CD8-positive, alpha-beta T cell (primary cell): ENCODE measurements at regions of chr2 and their contacts with region 1.

Region 1: GRCh38 chr2:39124000-39124745 is 3.3 kb upstream of the SOS1 start:
- DNase-seq: peak; percentile 89 to 99 (median 96)
- ATAC-seq: peak; percentile 73
- H3K4me3 ChIP-seq: peak overlapping the region; percentile 84 to 86
- H3K4me3 Mint-ChIP-seq: peak overlapping the region; percentile 91
- H3K27ac ChIP-seq: peak overlapping the region; percentile 87 to 88
- H3K27ac Mint-ChIP-seq: peak overlapping the region; percentile 96
- H3K4me1 ChIP-seq: peaks cover 41% of the 10 kb centered on the region
- H3K4me1 Mint-ChIP-seq: peaks cover 54% of the 10 kb centered on the region
- H3K27me3 ChIP-seq: no peaks in the 10 kb centered on the region
- H3K27me3 Mint-ChIP-seq: no peaks in the 10 kb centered on the region
- CTCF ChIP-seq: peak; percentile 64

Region 2: DNA sequence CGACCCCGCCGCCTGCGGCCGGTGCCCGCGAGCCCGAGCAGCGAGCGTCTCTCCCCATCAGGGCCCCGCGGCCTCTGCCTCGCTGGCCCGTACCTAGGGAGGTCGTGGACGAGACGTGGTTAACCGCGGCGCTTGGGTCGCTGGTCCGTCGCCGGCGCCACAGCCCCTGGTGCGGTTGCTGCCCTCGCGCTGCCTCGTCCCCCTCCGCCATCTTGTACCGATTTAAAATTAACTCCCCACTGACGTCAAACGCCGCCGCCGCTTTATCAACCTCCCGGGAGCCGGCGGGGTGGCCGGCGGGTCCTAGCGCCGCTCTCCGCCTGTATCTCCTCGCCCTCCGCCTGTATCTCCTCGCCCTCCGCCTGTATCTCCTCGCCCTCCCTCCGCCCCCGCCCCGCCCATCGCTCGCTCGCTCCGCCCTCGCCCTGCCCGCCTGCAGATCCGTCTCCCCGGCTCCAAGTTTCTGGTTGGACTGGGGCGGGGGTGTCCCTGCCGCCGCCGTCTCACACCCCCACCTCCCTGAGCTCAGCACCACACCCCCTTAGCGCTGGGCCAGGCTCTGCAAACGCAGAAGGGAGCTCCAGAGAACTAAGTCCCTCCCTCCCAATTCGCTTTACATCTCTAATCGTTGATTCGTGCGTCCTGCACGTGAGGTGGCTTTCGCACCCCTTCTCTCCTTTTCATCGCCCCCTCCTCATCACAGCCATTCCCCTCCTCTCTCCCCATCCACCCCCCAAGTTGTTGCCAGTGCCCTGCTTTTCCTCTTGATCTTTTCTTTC is 746.9 kb before region 1 on chr2 and contains the start of gene ATL2:
- CTCF ChIA-PET with region 1: no interaction called
- POLR2A ChIA-PET with region 1: no interaction called
- intact Hi-C with region 1: loop called (anchors 5 kb)
- DNase-seq: peak; percentile 87 to 96 (median 93)
- ATAC-seq: peak; percentile 80
- H3K4me3 ChIP-seq: peak within 1 kb of the TSS; percentile 71 to 93
- H3K4me3 Mint-ChIP-seq: peak within 1 kb of the TSS; percentile 97
- H3K27ac ChIP-seq: peak within 1 kb of the TSS; percentile 84 to 91
- H3K27ac Mint-ChIP-seq: peak within 1 kb of the TSS; percentile 96
- H3K4me1 ChIP-seq: peaks cover 35% of the 10 kb centered on the region
- H3K4me1 Mint-ChIP-seq: peaks cover 69% of the 10 kb centered on the region
- H3K27me3 ChIP-seq: no peaks in the 10 kb centered on the region
- H3K27me3 Mint-ChIP-seq: no peaks in the 10 kb centered on the region
- CTCF ChIP-seq: no peak
- total RNA-seq, gene ATL2: 76.4 to 88.2 TPM

Region 3: DNA sequence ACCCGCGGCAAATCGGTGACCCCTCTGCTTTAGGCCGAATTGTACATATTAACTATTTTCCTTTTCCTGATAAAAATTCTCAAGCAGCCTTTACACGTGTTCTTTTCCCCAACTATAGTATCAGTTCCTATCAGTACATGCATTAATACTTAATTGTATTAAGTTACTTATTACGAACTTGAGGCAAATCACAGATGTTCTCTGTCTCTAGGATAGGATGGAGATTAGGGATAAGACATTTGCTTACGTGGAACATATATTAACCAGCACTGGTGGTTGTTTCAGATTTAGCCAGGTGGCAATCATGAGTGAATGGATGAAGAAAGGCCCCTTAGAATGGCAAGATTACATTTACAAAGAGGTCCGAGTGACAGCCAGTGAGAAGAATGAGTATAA is 345.5 kb before region 1 on chr2:
- CTCF ChIA-PET with region 1: no interaction called
- POLR2A ChIA-PET with region 1: no interaction called
- intact Hi-C with region 1: loop called in 1 of 2 experiments (anchors 5 kb)
- DNase-seq: no peak
- ATAC-seq: no peak
- H3K4me3 ChIP-seq: peak overlapping the region; percentile 64 to 68
- H3K4me3 Mint-ChIP-seq: peak overlapping the region; percentile 98
- H3K27ac ChIP-seq: peak overlapping the region; percentile 72 to 77
- H3K27ac Mint-ChIP-seq: peak overlapping the region; percentile 99
- H3K4me1 ChIP-seq: peaks cover 6% of the 10 kb centered on the region
- H3K4me1 Mint-ChIP-seq: peaks cover 17% of the 10 kb centered on the region
- H3K27me3 ChIP-seq: peaks cover 0 to 3% of the 10 kb centered on the region in 2 experiments
- H3K27me3 Mint-ChIP-seq: peaks cover 6% of the 10 kb centered on the region
- CTCF ChIP-seq: no peak

Region 4: GRCh38 chr2:39033980-39034379 is 90.2 kb before region 1 on chr2:
- CTCF ChIA-PET with region 1: no interaction called
- POLR2A ChIA-PET with region 1: no interaction called
- intact Hi-C with region 1: no loop called
- DNase-seq: no peak
- ATAC-seq: no peak
- H3K4me3 ChIP-seq: no peak overlapping the region
- H3K4me3 Mint-ChIP-seq: no peak overlapping the region
- H3K27ac ChIP-seq: no peak overlapping the region
- H3K27ac Mint-ChIP-seq: no peak overlapping the region
- H3K4me1 ChIP-seq: no peaks in the 10 kb centered on the region
- H3K4me1 Mint-ChIP-seq: no peaks in the 10 kb centered on the region
- H3K27me3 ChIP-seq: no peaks in the 10 kb centered on the region
- H3K27me3 Mint-ChIP-seq: no peaks in the 10 kb centered on the region
- CTCF ChIP-seq: no peak

Region 5: GRCh38 chr2:39059366-39059952 is 64.7 kb before region 1 on chr2:
- CTCF ChIA-PET with region 1: interaction called, 21 read pairs
- POLR2A ChIA-PET with region 1: interaction called, 5 read pairs
- intact Hi-C with region 1: loop called (anchors 2 kb)
- DNase-seq: peak in 2 of 9 experiments; percentile 63 to 74
- ATAC-seq: no peak
- H3K4me3 ChIP-seq: no peak overlapping the region
- H3K4me3 Mint-ChIP-seq: no peak overlapping the region
- H3K27ac ChIP-seq: no peak overlapping the region
- H3K27ac Mint-ChIP-seq: peak overlapping the region; percentile 16
- H3K4me1 ChIP-seq: no peaks in the 10 kb centered on the region
- H3K4me1 Mint-ChIP-seq: peaks cover 3% of the 10 kb centered on the region
- H3K27me3 ChIP-seq: no peaks in the 10 kb centered on the region
- H3K27me3 Mint-ChIP-seq: no peaks in the 10 kb centered on the region
- CTCF ChIP-seq: peak; percentile 97

Region 6: DNA sequence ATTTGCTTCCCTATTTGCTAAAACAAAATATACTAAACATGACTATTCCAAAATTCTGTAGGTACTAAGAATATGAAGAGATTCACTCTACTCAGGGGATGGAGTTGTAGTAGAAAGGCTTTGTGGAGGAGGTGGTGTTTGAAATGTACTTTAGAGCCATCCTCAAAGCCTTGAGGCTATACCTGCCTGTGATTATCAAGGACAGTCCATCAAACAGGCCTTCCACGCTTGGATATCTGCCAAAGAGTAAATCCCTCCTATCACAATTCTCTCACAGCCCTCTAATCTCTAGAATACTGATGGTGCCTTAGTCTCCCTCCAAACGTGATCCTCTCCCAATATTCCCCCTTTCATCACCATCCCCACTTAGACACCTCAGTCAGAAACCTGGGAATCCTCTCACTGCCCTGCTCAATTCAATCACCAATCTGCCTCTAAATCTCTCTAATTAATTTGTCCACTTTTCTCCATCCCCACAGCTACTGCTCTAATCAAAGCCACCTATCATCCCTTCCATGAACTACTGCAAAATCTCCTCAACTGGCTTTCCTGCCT is 16.4 kb before region 1 on chr2:
- CTCF ChIA-PET with region 1: interaction called, 4 read pairs
- POLR2A ChIA-PET with region 1: interaction called, 10 read pairs
- intact Hi-C with region 1: loop called in 1 of 2 experiments (anchors 2 kb)
- DNase-seq: no peak
- ATAC-seq: no peak
- H3K4me3 ChIP-seq: no peak overlapping the region
- H3K4me3 Mint-ChIP-seq: no peak overlapping the region
- H3K27ac ChIP-seq: no peak overlapping the region
- H3K27ac Mint-ChIP-seq: peak overlapping the region; percentile 33
- H3K4me1 ChIP-seq: peaks cover 21% of the 10 kb centered on the region
- H3K4me1 Mint-ChIP-seq: peaks cover 70% of the 10 kb centered on the region
- H3K27me3 ChIP-seq: no peaks in the 10 kb centered on the region
- H3K27me3 Mint-ChIP-seq: no peaks in the 10 kb centered on the region
- CTCF ChIP-seq: no peak

Region 7: GRCh38 chr2:39227628-39228412 is 103.6 kb after region 1 on chr2:
- CTCF ChIA-PET with region 1: interaction called, 219 read pairs
- POLR2A ChIA-PET with region 1: interaction called, 71 read pairs
- intact Hi-C with region 1: loop called (anchors 1 kb)
- DNase-seq: peak; percentile 67 to 90 (median 83)
- ATAC-seq: peak; percentile 90
- H3K4me3 ChIP-seq: peak overlapping the region; percentile 31 to 35
- H3K4me3 Mint-ChIP-seq: peak overlapping the region; percentile 77
- H3K27ac ChIP-seq: no peak overlapping the region
- H3K27ac Mint-ChIP-seq: no peak overlapping the region
- H3K4me1 ChIP-seq: peaks cover 17% of the 10 kb centered on the region
- H3K4me1 Mint-ChIP-seq: peaks cover 19% of the 10 kb centered on the region
- H3K27me3 ChIP-seq: no peaks in the 10 kb centered on the region
- H3K27me3 Mint-ChIP-seq: no peaks in the 10 kb centered on the region
- CTCF ChIP-seq: peak; percentile 76

Region 8: GRCh38 chr2:39313575-39313974 is 189.4 kb after region 1 on chr2:
- CTCF ChIA-PET with region 1: no interaction called
- POLR2A ChIA-PET with region 1: no interaction called
- intact Hi-C with region 1: no loop called
- DNase-seq: no peak
- ATAC-seq: no peak
- H3K4me3 ChIP-seq: no peak overlapping the region
- H3K4me3 Mint-ChIP-seq: no peak overlapping the region
- H3K27ac ChIP-seq: no peak overlapping the region
- H3K27ac Mint-ChIP-seq: no peak overlapping the region
- H3K4me1 ChIP-seq: no peaks in the 10 kb centered on the region
- H3K4me1 Mint-ChIP-seq: no peaks in the 10 kb centered on the region
- H3K27me3 ChIP-seq: no peaks in the 10 kb centered on the region
- H3K27me3 Mint-ChIP-seq: no peaks in the 10 kb centered on the region
- CTCF ChIP-seq: no peak

Region 9: GRCh38 chr2:39642051-39642742 is 518.0 kb after region 1 on chr2:
- CTCF ChIA-PET with region 1: no interaction called
- POLR2A ChIA-PET with region 1: no interaction called
- intact Hi-C with region 1: no loop called
- DNase-seq: no peak
- ATAC-seq: no peak
- H3K4me3 ChIP-seq: no peak overlapping the region
- H3K4me3 Mint-ChIP-seq: no peak overlapping the region
- H3K27ac ChIP-seq: no peak overlapping the region
- H3K27ac Mint-ChIP-seq: no peak overlapping the region
- H3K4me1 ChIP-seq: no peaks in the 10 kb centered on the region
- H3K4me1 Mint-ChIP-seq: no peaks in the 10 kb centered on the region
- H3K27me3 ChIP-seq: no peaks in the 10 kb centered on the region
- H3K27me3 Mint-ChIP-seq: peaks cover 2% of the 10 kb centered on the region
- CTCF ChIP-seq: no peak

Region 10: DNA sequence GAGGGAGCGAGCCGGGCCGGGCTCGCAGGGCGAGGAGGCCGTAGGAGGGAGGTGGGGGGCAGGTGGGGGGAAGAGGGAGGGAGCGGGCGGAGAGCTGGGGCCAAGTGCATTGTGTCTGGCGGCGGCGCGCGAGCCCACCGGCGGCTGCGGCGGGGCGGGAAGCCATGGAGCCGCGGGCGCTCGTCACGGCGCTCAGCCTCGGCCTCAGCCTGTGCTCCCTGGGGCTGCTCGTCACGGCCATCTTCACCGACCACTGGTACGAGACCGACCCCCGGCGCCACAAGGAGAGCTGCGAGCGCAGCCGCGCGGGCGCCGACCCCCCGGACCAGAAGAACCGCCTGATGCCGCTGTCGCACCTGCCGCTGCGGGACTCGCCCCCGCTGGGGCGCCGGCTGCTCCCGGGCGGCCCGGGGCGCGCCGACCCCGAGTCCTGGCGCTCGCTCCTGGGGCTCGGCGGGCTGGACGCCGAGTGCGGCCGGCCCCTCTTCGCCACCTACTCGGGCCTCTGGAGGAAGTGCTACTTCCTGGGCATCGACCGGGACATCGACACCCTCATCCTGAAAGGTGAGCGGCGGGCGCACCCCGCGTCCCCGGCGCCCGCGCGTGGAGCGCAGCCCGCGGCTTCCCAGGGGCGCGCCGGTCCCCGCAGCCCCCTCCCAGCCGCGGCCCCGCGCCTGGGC is 541.8 kb after region 1 on chr2 and contains the start of gene TMEM178A:
- CTCF ChIA-PET with region 1: no interaction called
- POLR2A ChIA-PET with region 1: no interaction called
- intact Hi-C with region 1: no loop called
- DNase-seq: peak in 1 of 9 experiments; percentile 1
- ATAC-seq: no peak
- H3K4me3 ChIP-seq: no peak within 1 kb of the TSS
- H3K4me3 Mint-ChIP-seq: peak within 1 kb of the TSS; percentile 42
- H3K27ac ChIP-seq: no peak within 1 kb of the TSS
- H3K27ac Mint-ChIP-seq: no peak within 1 kb of the TSS
- H3K4me1 ChIP-seq: no peaks in the 10 kb centered on the region
- H3K4me1 Mint-ChIP-seq: peaks cover 11% of the 10 kb centered on the region
- H3K27me3 ChIP-seq: peaks cover 0 to 3% of the 10 kb centered on the region in 2 experiments
- H3K27me3 Mint-ChIP-seq: peaks cover 52% of the 10 kb centered on the region
- CTCF ChIP-seq: no peak
- total RNA-seq, gene TMEM178A: 0.22 to 0.25 TPM